Right lobe of liver (tissue), 6 donors: ENCODE measurements at regions of chr19 and their contacts with region 1.

Region 1: DNA sequence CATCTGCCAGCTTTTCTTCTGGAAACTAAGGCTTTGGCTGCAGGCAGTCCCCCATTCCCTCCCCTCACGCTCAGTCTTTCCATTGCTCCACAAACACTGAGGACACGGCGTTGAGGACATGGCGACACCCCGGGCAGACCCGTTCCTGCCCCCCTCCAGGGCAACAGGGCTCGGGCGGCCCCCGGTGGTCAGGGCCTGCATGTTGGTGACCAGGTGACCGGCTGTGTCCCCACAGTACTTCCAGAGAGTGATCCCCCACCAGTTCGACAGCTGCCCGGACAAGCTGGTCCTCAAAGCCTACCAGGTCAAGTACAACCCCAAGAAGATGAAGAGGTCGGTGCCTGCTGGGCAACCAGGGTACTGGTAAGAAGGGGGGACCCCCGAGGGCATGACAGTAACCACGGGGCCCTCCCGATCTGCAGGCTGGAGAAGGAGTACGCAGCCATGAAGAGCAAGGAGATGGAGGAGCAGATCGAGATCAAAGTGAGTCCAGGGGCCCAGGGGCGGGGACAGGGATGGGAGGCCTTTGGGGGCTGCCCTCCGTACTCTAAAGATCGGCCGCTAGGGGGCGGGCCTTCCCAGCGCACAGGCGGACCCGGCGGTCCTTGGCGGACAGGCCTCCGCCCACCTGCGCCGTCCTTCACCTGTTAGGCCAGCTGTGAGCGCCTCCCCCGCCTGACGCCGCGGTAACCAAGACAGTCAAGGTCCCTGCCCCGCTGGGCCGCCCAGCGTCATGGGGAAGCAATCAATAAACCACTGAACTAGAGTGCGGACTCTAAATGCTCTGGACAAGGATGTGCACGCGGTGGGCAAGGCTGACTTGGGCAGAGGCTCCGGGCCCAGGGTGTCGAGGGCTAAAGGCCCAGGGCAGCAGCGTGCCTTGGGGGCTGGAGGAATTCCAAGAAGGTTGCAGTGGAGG is 21.1 kb downstream of the PRR36 start:
- DNase-seq: peak; percentile 93 to 97 (median 96)
- ATAC-seq: peak; percentile 96 to 99 (median 97)
- H3K4me3 ChIP-seq: no peak overlapping the region
- H3K27ac ChIP-seq: peak overlapping the region in 1 of 3 donors; percentile 43
- H3K4me1 ChIP-seq: peaks cover 0 to 8% (median 3%) of the 10 kb centered on the region in 4 donors
- H3K27me3 ChIP-seq: no peaks in the 10 kb centered on the region
- CTCF ChIP-seq: peak; percentile 87 to 96 (median 90)
- POLR2A ChIP-seq: no peak

Region 2: DNA sequence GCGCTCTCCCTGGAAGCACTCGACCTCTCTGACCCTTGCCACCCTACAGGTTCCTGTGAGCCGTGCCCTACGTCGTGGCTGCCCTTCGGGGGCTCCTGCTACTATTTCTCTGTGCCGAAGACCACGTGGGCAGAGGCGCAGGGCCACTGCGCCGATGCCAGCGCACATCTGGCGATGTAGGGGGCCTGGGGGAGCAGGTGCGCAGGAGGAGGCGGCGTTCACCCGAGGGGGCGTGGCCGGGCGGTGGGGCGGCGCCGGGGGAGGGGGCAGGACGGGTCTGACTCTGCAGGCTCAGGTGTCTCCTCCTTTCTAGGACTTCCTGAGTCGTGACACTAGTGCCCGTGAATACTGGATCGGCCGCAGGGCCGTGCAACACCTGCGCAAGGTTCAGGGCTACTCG is 63.7 kb before region 1 on chr19:
- intact Hi-C with region 1: no loop called
- DNase-seq: no peak
- ATAC-seq: no peak
- H3K4me3 ChIP-seq: no peak overlapping the region
- H3K27ac ChIP-seq: no peak overlapping the region
- H3K4me1 ChIP-seq: no peaks in the 10 kb centered on the region
- H3K27me3 ChIP-seq: no peaks in the 10 kb centered on the region
- CTCF ChIP-seq: no peak
- POLR2A ChIP-seq: no peak

Region 3: GRCh38 chr19:7903244-7904073 is 50.3 kb after region 1 on chr19 and contains the start of gene MAP2K7:
- intact Hi-C with region 1: loop called (anchors 5 to 10 kb)
- DNase-seq: peak; percentile 100
- ATAC-seq: peak; percentile 80 to 93 (median 86)
- H3K4me3 ChIP-seq: peak within 1 kb of the TSS; percentile 72 to 83 (median 82)
- H3K27ac ChIP-seq: peak within 1 kb of the TSS; percentile 75 to 83 (median 75)
- H3K4me1 ChIP-seq: peaks cover 0 to 16% (median 4%) of the 10 kb centered on the region in 4 donors
- H3K27me3 ChIP-seq: no peaks in the 10 kb centered on the region
- CTCF ChIP-seq: peak; percentile 23 to 78 (median 59)
- POLR2A ChIP-seq: peak; percentile 85
- total RNA-seq, gene MAP2K7: 9.7 to 22.1 (median 15.6) TPM